Common myeloid progenitor, CD34-positive (primary cell): ENCODE measurements at regions of chr7 and their contacts with region 1.

Region 1: DNA sequence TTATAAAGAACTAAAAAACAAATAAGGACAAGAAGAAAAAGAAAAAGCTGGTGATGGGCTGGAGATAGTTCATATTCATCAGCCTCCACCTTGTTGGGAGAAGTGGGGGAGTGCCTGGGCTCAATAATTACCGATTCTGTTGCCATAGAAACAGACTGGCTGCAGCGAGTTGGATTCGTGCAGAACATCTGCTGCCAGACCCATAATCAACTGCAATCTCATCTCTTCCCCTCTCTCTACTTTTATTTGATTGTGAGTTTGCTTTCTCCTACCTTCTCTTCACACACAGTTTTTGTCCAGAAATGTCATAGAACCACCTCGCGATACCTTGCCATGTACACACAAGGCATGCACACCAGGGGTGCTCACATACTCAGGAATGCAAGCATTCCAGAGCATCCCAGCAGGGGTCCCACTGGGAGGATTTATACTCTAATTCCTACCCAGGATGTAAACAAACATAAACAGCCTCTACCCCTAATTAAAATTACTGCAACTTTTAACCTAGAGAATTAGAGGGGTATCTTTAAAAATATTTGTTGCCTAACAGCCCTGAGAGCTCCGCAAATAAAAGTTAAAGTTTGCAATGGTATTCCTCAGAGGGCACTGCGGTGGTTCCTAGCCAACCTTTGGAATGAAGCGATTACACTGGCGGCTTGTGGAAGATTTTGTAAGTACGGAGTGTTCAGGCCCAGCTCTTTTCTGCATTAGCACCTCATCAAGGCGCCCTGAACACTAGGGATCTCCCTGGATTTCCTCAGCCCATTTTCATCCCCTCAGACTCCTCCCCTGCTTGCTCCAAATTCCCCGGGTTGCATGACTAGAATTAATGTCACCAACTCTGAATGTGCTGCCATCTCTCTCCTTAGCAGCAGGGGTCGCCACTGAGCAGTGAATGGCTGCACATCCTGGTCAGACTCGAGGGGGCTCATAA is 262.4 kb upstream of the AOAH start:
- DNase-seq: peak; percentile 50 to 71 (median 62)
- H3K4me3 ChIP-seq: no peak overlapping the region
- H3K27ac ChIP-seq: no peak overlapping the region
- H3K4me1 ChIP-seq: peaks cover 6 to 20% (median 14%) of the 10 kb centered on the region in 4 experiments
- H3K27me3 ChIP-seq: no peaks in the 10 kb centered on the region

Region 2: DNA sequence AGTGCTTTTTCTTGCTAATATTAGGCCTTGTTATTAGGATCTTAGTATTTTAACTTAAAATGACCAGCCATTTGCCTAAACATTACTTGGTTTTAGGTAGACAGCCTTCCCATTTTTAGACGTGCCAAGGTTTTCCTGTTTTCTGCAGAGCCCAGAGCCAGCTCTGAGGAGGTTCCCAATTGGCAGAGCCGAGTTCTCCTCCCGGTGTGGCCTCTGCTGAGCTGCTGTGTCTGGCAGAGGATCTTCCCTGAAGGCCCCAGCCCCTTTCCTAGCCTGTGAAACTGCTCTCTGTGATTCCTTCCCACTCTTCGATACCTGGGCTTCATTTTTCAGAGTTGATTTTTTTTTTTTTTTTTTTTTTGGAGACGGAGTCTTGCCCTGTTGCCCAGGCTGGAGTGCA is 742.3 kb before region 1 on chr7:
- CTCF ChIA-PET with region 1: no interaction called
- POLR2A ChIA-PET with region 1: no interaction called
- DNase-seq: no peak
- H3K4me3 ChIP-seq: no peak overlapping the region
- H3K27ac ChIP-seq: no peak overlapping the region
- H3K4me1 ChIP-seq: no peaks in the 10 kb centered on the region
- H3K27me3 ChIP-seq: no peaks in the 10 kb centered on the region

Region 3: DNA sequence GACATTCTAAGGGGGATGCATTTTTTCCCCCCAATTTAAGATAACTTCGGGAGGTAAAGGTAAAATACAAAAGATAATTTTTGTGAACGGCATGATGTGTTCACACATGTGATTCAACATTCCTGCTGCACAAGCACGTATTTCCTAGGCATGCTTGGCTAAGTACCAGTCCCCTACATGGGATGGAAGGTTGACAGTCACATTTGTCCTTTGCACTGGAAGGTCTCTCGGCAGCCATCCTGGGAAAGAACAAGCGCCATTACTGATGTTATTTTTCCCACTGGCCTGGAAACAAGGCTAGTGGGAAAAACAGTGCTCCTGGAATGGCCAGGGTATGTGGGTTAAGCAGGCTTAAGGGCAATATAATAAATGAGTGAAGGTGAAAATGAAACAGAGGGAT is 13.8 kb after region 1 on chr7:
- CTCF ChIA-PET with region 1: interaction called, 10 read pairs
- POLR2A ChIA-PET with region 1: no interaction called
- DNase-seq: no peak
- H3K4me3 ChIP-seq: no peak overlapping the region
- H3K27ac ChIP-seq: no peak overlapping the region
- H3K4me1 ChIP-seq: no peaks in the 10 kb centered on the region
- H3K27me3 ChIP-seq: no peaks in the 10 kb centered on the region

Region 4: DNA sequence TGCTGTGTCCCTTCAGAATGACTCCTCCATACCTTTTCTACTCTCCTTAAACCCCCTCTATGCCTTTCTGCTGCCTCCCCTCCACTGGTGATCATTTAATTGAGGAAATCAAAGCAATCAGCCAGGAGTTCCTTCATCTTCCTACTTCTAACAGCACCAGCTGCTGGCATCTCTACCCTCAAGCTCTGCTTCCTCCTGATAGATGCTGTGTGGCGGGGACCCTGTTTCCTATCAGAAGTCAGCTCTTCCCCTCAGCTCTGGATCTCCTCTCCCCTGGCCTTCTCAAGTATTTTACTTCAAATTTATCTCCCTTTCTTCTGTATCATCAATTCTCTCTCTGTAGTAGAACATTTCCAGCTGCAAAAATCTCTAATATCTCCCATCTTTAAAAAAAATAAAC is 278.3 kb after region 1 on chr7:
- CTCF ChIA-PET with region 1: no interaction called
- POLR2A ChIA-PET with region 1: no interaction called
- DNase-seq: peak; percentile 87 to 97 (median 94)
- H3K4me3 ChIP-seq: peak overlapping the region in 1 of 7 experiments; percentile 17
- H3K27ac ChIP-seq: peak overlapping the region in 1 of 2 experiments; percentile 17
- H3K4me1 ChIP-seq: peaks cover 20 to 40% (median 33%) of the 10 kb centered on the region in 4 experiments
- H3K27me3 ChIP-seq: no peaks in the 10 kb centered on the region